Ascending aorta (tissue), 2 donors: ENCODE measurements at regions of chr10 and their contacts with region 1.

Region 1: DNA sequence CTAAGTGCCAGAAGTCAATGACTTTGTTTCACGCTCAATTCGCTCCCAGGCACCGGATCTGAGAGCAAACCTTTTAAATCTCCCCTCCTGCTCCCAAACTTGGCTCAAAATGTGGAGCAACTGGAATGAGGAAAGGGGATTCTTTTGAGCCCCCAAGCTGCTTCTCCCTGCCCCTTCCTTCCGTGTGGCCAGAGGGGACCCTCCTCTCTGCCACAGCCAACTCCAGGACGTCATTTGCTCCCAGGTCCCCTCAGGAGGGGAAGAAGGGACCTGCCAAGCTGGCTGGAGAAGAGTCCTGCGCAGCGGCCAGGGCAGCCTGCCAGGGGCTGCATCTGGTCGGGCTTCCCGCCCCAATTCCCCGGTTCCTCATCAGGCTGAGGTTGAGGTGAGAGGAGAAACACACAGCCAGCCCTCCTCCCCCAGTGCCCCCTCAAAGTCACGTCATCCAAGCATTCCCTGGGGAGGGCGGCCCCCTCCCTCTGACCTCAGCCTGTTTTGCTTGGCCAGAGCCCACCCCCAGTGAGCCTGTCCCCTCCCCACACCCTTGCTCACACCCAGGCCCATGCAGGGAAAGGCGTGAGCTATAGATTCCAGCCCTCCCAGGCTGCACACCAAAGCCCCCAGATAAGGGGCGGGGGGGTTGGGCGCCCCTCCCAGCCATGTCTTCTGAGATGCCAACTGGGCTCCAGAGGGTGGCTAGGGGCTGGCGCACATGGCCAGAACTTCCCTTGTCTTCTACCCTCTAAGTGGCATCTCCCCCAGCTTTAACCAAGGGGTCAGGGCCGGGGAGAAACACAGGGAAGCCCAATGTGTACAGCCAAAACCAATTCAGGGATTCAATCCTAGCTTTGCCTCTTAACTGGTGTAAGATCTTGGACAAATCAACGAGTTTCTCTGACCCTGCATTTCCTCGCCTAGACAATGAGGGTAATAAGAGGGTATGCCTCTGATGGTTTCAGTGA is 35.0 kb downstream of the SH3PXD2A start:
- DNase-seq: peak; percentile 19 to 85
- H3K4me3 ChIP-seq: peak overlapping the region; percentile 41 to 52
- H3K27ac ChIP-seq: peak overlapping the region; percentile 89
- H3K4me1 ChIP-seq: peaks cover 10 to 27% of the 10 kb centered on the region in 2 donors
- H3K27me3 ChIP-seq: no peaks in the 10 kb centered on the region
- CTCF ChIP-seq: no peak

Region 2: DNA sequence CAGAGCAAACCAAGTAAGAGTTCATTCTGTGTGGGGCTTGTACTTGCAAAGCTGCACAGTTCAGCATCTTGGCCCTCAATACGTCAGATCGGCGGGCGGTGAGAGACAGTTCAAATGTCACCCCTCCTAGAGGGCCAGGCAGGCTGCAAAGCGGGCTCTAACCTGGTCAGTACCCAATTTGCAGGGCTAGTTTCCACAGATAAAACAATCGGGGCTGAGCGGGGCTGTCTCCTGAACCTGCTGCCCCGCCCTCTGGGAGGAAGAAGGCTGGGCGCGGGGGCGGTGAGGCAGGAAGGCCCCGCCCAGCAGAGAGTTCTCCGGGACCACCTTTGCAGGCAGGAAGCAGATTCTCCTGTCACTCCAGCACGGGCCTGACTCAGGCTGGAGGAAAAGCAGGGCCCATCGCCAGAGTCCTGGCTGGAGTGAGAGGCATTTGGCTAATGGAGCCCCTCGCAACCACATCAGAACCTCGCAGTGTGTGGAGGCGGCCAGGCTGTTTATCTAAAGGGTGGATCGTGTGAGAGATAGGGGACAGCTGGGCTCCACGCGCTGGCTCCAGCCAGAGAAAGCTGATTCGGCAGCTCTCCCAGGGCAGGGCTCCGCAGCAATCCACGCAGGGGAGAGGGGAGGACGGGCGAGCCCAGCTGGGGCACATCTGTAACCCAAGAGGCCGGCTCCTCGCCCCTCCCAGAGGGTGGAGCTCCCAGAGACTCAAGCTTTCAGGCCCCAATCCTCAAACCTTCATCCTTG is 48.1 kb before region 1 on chr10:
- intact Hi-C with region 1: loop called (anchors 5 kb)
- DNase-seq: peak; percentile 33 to 85
- H3K4me3 ChIP-seq: peak overlapping the region; percentile 50 to 62
- H3K27ac ChIP-seq: peak overlapping the region; percentile 74 to 79
- H3K4me1 ChIP-seq: peaks cover 0 to 15% of the 10 kb centered on the region in 2 donors
- H3K27me3 ChIP-seq: no peaks in the 10 kb centered on the region
- CTCF ChIP-seq: no peak

Region 3: DNA sequence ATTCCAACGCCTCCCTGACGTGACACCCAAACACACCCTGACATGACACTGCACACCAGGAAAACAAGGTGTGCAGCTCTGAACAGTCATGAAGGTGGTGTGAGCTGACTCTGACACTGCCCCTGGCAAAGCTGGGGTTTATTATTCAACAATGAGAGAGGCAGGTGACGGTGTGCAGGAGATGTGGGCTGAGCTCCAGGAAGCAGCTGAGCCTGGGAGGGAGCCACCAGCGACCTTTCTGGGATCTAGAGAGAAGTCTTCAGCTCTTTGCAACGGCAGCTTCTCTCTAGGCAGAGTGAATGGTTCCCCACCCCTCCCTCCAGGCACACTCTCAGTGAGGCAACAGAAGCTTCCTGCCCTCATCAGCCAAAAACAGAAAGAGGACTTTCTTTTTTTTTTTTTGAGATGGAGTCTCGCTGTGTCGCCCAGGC is 30.6 kb before region 1 on chr10:
- intact Hi-C with region 1: no loop called
- DNase-seq: no peak
- H3K4me3 ChIP-seq: no peak overlapping the region
- H3K27ac ChIP-seq: no peak overlapping the region
- H3K4me1 ChIP-seq: no peaks in the 10 kb centered on the region
- H3K27me3 ChIP-seq: no peaks in the 10 kb centered on the region
- CTCF ChIP-seq: no peak

Region 4: GRCh38 chr10:103835096-103836050 is 15.0 kb after region 1 on chr10:
- intact Hi-C with region 1: loop called (anchors 2 kb)
- DNase-seq: peak in 1 of 2 donors; percentile 87
- H3K4me3 ChIP-seq: no peak overlapping the region
- H3K27ac ChIP-seq: peak overlapping the region in 1 of 2 donors; percentile 55
- H3K4me1 ChIP-seq: peaks cover 24 to 28% of the 10 kb centered on the region in 2 donors
- H3K27me3 ChIP-seq: no peaks in the 10 kb centered on the region
- CTCF ChIP-seq: no peak

Region 5: GRCh38 chr10:103859161-103860086 is 39.0 kb after region 1 on chr10:
- intact Hi-C with region 1: loop called (anchors 2 kb)
- DNase-seq: no peak
- H3K4me3 ChIP-seq: no peak overlapping the region
- H3K27ac ChIP-seq: no peak overlapping the region
- H3K4me1 ChIP-seq: peaks cover 0 to 2% of the 10 kb centered on the region in 2 donors
- H3K27me3 ChIP-seq: no peaks in the 10 kb centered on the region
- CTCF ChIP-seq: peak; percentile 64 to 81 (median 81)

Region 6: GRCh38 chr10:104032144-104032775 is 211.9 kb after region 1 on chr10:
- intact Hi-C with region 1: no loop called
- DNase-seq: no peak
- H3K4me3 ChIP-seq: no peak overlapping the region
- H3K27ac ChIP-seq: no peak overlapping the region
- H3K4me1 ChIP-seq: no peaks in the 10 kb centered on the region
- H3K27me3 ChIP-seq: no peaks in the 10 kb centered on the region
- CTCF ChIP-seq: no peak